A673 (cell line): ENCODE measurements at regions of chr9 and their contacts with region 1.

Region 1: DNA sequence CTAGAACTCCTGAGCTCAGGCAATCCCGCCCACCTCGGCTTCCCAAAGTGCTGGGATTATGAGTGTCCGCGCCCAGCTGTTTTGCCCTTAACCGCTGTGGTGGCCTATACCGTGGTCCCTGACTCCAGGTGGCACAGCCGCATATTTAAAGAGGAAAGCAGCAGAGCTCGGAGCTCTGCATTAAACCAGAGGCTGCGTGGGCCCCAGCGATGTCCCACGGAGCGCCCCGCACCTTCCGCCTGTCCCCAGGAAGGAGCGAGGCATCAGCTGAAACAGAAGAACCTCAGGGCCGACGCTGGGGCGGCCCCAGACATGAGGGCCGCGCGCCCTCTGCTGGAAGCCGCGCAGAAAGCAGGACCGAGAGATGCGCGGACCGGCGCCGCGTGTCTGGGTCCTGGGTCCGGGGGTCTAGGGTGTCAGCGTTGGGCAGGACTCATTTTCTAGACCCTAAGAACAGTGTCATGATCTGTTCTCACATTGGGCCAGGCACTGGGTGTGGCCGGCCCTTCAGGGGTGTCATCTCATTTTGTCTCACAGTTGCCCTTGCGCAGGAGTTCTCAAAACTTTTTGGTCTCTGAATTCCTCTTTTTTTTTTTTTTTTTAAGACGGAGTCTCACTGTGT is 37.7 kb downstream of the LAMC3 start:
- DNase-seq: peak; percentile 82
- H3K4me3 ChIP-seq: no peak overlapping the region
- H3K27ac ChIP-seq: no peak overlapping the region
- H3K4me1 ChIP-seq: no peaks in the 10 kb centered on the region
- H3K27me3 ChIP-seq: no peaks in the 10 kb centered on the region
- CTCF ChIP-seq: peak; percentile 97

Region 2: DNA sequence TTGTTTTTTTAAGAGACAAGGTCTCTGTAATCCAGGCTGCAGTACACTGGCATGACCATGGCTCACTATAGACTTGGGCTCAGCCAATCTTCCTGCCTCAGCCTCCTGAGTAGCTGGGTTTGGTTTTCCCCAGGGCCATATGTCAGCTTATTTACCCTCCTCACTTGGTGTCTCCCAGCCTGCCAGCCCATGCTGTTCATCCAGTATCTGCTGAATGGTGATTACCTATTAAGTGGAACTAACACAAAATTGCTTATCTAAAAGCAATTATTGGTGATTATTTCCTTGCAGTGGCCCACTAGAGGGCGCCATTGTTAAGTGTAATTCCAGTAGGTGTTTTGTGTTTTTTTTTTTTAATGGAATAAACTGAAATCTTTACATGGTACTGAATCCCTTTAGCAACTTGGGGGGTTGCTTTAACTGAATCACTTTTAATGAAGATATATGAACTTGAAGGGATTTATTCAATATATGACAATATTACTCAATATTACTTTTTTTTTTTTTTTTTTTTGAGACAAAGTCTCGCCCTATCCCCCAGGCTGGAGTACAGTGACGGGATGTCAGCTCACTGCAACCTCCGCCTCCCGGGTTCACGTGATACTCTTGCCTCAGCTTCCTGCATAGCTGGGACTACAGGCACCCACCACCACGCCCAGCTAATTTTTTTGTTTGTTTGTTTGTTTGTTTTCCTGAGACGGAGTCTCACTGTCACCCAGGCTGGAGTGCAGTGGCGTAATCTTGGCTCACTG is 339.3 kb before region 1 on chr9:
- CTCF ChIA-PET with region 1: interaction called, 6 read pairs
- POLR2A ChIA-PET with region 1: no interaction called
- intact Hi-C with region 1: loop called (anchors 5 kb)
- DNase-seq: peak; percentile 68
- H3K4me3 ChIP-seq: no peak overlapping the region
- H3K27ac ChIP-seq: no peak overlapping the region
- H3K4me1 ChIP-seq: no peaks in the 10 kb centered on the region
- H3K27me3 ChIP-seq: no peaks in the 10 kb centered on the region
- CTCF ChIP-seq: peak; percentile 92

Region 3: DNA sequence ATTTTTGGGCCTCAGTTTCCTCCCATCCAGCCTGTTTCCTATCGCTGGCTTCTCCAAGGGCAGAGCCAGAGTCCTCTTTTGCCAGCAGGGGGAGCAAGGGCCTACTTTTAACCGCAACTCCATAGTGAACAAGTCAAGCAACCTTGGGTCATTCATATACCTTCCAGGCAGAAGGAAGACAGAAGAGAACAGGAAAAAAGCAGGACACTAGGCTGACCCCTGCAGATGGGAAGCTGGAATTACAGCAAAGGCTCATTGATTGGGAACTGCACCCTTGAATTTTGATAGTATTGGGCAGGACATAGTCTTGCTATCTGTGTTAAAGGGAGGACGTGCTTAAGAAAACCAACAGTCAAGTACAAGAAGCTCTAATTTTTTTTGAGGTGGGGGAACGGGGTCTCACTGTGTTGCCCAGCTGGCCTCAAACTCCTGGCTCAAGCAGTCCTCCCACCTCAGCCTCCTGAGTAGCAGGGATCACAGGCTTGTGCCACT is 180.2 kb before region 1 on chr9:
- CTCF ChIA-PET with region 1: interaction called, 6 read pairs
- POLR2A ChIA-PET with region 1: no interaction called
- intact Hi-C with region 1: loop called (anchors 1 kb)
- DNase-seq: peak; percentile 91
- H3K4me3 ChIP-seq: no peak overlapping the region
- H3K27ac ChIP-seq: no peak overlapping the region
- H3K4me1 ChIP-seq: peaks cover 23% of the 10 kb centered on the region
- H3K27me3 ChIP-seq: no peaks in the 10 kb centered on the region
- CTCF ChIP-seq: peak; percentile 98

Region 4: GRCh38 chr9:130940693-130941576 is 105.8 kb before region 1 on chr9:
- CTCF ChIA-PET with region 1: interaction called, 7 read pairs
- POLR2A ChIA-PET with region 1: no interaction called
- intact Hi-C with region 1: loop called (anchors 10 kb)
- DNase-seq: peak; percentile 50
- H3K4me3 ChIP-seq: no peak overlapping the region
- H3K27ac ChIP-seq: no peak overlapping the region
- H3K4me1 ChIP-seq: no peaks in the 10 kb centered on the region
- H3K27me3 ChIP-seq: peaks cover 47% of the 10 kb centered on the region
- CTCF ChIP-seq: peak; percentile 86

Region 5: GRCh38 chr9:131084661-131085369 is 38.1 kb after region 1 on chr9:
- CTCF ChIA-PET with region 1: no interaction called
- POLR2A ChIA-PET with region 1: interaction called, 10 read pairs
- intact Hi-C with region 1: no loop called
- DNase-seq: no peak
- H3K4me3 ChIP-seq: no peak overlapping the region
- H3K27ac ChIP-seq: no peak overlapping the region
- H3K4me1 ChIP-seq: no peaks in the 10 kb centered on the region
- H3K27me3 ChIP-seq: peaks cover 7% of the 10 kb centered on the region
- CTCF ChIP-seq: no peak